ACHN (cell line): ENCODE measurements at regions of chr13 and their contacts with region 1.

Region 1: DNA sequence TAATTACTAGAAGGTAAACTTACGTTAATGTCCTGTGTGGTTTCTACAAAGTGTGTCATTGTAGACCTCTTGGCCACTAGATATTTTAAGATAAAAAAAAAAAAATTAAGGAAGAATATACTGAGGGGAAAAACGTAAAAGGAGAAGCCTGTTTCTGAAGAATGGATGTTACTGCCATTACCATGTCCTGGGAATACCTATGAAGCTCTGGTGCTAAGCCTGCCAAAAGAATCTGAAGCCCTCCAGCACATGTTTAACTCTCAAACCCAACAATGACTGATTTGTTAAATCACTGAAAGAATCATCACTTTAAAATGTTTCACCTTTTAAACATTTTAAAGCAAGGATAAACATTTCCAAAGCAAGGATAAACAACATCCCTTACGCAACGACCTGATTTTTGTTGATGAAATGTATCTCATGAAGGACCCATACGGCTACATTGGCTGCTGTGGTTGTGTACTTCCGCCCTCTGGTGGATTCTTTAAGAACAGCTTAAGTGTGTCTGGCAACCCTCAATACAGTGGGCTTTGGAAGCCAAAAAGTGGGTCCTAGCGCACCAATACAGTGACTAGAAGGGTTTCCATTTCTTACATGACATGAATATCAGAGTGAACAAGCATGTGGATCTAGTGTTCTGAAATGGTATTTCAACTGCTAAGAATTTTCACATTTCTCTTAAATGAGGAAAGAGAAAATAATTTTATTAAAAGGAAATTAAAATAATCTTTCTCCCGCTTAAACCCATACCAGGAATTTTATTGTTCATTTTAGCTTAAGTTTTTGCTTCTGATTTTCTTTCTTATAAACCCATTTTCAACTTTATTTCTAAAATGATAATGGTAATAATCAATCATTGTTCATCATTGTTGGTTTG is 74.5 kb upstream of the RAP2A start:
- DNase-seq: peak; percentile 69

Region 2: DNA sequence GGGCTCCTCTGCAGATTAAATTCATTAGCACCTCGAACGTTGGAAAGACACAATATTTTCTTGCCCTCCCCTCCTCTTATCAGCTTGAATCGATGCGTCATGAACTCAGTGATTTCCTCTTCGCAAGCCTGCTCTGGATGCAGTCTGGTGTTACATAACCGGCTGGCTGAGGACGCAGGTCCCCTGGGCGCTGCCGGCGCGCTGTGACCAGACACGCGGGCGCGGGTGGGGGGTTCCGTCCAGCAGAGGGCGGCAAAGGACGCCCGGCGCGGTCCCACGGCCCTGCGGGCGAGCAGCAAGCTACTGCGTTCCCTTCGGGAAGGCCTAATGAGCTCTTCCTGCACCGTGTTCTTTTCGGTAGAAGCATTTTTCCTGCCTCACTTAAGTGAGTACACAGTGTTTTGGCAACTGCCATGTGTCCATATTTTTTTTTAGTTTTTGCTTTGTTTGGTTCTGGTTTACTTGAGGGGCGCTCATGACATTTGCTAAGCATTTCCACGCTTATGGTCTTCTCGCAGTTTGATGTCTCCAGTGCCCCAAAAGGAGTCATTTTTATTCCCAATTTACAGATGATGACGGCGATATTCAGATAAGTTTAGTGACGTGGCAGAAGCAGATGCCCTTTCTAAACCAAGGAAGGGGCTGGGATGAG is 249.5 kb before region 1 on chr13:
- in situ Hi-C with region 1: loop called (anchors 25 kb)
- DNase-seq: peak; percentile 73

Region 3: GRCh38 chr13:97221989-97222700 is 137.3 kb before region 1 on chr13 and contains the start of gene MBNL2:
- in situ Hi-C with region 1: loop called (anchors 25 kb)
- DNase-seq: peak; percentile 89